Esophagus muscularis mucosa (tissue), 4 donors: ENCODE measurements at regions of chr9 and their contacts with region 1.

Region 1: DNA sequence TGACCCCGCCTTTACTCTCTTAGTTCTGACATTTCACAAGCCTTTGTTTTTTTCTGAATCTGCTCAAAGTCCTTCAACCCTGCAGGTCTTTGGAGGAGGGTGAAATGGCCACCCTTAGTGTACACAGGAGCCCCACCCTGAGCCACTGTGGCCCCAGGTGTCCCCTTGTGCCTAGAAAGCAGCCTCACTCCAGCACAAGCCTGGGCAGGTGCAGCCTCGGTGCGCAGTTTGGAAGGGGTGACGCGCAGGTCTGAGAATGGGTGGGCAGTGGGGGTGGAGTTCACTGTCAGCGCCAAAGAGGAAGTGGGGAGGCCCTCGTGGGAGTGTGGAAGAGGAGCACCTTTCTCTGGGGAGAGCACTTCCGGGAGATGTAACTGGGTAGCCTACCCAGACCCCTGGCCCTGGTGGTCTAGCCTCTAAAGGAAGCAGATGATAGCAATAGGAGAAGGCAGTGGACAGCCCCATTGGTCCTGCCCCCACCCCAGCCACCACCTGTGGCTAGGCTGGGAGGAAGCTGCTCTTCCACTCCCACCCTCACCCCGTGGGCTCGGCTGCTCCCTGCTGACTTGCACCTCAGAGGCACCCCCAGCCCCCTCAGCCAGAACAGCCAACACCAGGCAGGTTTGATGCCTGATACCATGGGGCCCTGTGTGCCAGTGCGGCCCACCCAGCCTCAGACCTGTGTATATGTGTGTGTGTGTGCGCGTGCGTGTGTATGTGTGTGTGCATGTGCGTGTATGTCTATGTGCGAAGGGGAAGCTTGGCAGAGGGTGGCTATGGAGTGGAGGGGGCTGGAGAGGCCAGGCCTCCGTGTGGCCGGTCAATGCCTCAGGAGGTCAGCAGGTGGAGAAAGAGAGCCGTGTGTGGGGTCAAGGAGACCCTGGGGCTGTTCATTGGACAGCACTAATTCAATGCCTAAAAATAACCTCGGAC is 16.8 kb upstream of the DAB2IP start:
- DNase-seq: no peak
- H3K4me3 ChIP-seq: no peak overlapping the region
- H3K27ac ChIP-seq: no peak overlapping the region
- H3K4me1 ChIP-seq: peaks cover 51 to 77% (median 55%) of the 10 kb centered on the region in 4 donors
- H3K27me3 ChIP-seq: no peaks in the 10 kb centered on the region
- CTCF ChIP-seq: peak; percentile 24 to 60 (median 52)
- EP300 ChIP-seq: no peak
- POLR2A ChIP-seq: no peak

Region 2: GRCh38 chr9:121686930-121687541 is 52.4 kb after region 1 on chr9:
- intact Hi-C with region 1: loop called (anchors 5 kb)
- DNase-seq: no peak
- H3K4me3 ChIP-seq: no peak overlapping the region
- H3K27ac ChIP-seq: peak overlapping the region in 1 of 4 donors; percentile 47
- H3K4me1 ChIP-seq: peaks cover 26 to 53% (median 36%) of the 10 kb centered on the region in 4 donors
- H3K27me3 ChIP-seq: no peaks in the 10 kb centered on the region
- CTCF ChIP-seq: peak; percentile 75 to 90 (median 80)
- EP300 ChIP-seq: no peak
- POLR2A ChIP-seq: no peak

Region 3: DNA sequence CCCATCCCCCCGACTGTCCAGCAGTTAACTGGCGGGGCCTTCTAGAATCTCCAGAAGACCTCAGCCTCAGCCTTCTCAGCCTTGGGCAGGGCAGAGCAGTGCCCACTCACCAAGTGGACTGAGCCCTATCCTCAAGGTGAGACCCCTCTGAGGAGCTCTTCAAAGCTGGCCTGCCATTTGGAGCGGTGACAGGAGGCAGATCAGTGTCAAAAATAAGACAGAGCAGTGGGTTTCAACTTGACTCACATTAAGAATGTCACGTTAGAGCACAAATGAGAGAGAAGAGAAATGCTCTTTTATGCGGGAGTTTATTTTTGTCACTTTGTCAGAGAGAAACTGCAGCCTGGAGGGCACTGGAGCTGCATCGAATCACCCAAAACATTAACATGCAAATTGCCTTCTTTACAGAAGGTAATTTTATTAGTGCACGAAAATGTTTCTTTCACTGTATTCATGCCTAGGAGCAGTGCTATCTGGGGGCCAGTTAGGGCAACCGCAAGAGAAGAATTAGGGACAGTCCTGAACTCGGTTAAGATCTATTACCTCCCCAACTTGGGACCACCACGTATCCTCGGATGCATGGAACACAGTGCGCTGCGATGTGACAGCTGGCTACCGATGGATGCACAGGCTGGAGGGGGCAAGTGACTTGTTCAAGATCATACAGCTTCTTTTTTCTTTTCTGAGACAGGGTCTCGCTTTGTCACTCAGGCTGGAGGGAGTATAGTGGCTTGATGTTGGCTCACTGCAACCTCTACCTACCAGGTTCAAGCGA is 205.3 kb after region 1 on chr9:
- intact Hi-C with region 1: loop called (anchors 10 kb)
- DNase-seq: no peak
- H3K4me3 ChIP-seq: no peak overlapping the region
- H3K27ac ChIP-seq: no peak overlapping the region
- H3K4me1 ChIP-seq: peaks cover 0 to 14% (median 11%) of the 10 kb centered on the region in 4 donors
- H3K27me3 ChIP-seq: no peaks in the 10 kb centered on the region
- CTCF ChIP-seq: no peak
- EP300 ChIP-seq: no peak
- POLR2A ChIP-seq: no peak

Region 4: DNA sequence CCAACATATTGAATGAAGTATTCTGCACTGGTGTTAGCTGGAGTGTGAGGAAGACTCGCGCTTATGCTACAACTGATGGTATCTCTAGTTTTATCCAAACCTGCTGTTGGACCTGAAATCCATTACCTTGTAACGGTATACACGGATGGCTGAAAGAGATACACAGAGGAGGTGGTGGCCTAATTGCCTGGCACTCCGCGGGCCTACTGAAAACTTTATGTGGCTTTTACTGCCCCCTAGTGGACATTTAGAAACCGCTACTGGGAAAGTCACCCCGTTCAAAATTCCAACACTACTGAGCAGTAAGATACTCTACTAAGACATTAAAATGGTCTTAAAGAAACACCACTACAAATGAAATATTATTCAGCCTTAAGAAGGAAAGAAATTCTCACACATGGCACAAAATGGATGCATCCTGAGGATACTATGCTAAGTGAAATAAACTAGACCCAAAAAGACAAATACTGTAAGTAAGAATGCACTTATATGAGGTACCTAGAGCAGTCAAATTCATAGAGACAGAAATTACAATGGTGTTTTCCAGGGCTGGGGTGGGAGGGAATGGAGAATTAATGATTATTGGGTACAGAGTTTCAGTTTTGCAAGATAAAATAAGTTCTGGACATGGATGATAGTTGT is 358.1 kb after region 1 on chr9:
- intact Hi-C with region 1: loop called (anchors 5 kb)
- DNase-seq: peak; percentile 92
- H3K4me3 ChIP-seq: no peak overlapping the region
- H3K27ac ChIP-seq: no peak overlapping the region
- H3K4me1 ChIP-seq: peaks cover 4 to 14% (median 9%) of the 10 kb centered on the region in 4 donors
- H3K27me3 ChIP-seq: no peaks in the 10 kb centered on the region
- CTCF ChIP-seq: peak; percentile 82 to 86 (median 83)
- EP300 ChIP-seq: no peak
- POLR2A ChIP-seq: no peak